Activated CD4-positive, alpha-beta T cell treated with anti-CD3 and anti-CD28 coated beads for 36 hours (primary cell): ENCODE measurements at regions of chr17 and their contacts with region 1.

Region 1: GRCh38 chr17:640436-640835 is 74.2 kb downstream of the VPS53 start:
- DNase-seq: no peak
- ATAC-seq: no peak
- H3K4me3 Mint-ChIP-seq: no peak overlapping the region
- H3K27ac Mint-ChIP-seq: no peak overlapping the region
- H3K4me1 Mint-ChIP-seq: peaks cover 13% of the 10 kb centered on the region
- H3K27me3 Mint-ChIP-seq: no peaks in the 10 kb centered on the region

Region 2: DNA sequence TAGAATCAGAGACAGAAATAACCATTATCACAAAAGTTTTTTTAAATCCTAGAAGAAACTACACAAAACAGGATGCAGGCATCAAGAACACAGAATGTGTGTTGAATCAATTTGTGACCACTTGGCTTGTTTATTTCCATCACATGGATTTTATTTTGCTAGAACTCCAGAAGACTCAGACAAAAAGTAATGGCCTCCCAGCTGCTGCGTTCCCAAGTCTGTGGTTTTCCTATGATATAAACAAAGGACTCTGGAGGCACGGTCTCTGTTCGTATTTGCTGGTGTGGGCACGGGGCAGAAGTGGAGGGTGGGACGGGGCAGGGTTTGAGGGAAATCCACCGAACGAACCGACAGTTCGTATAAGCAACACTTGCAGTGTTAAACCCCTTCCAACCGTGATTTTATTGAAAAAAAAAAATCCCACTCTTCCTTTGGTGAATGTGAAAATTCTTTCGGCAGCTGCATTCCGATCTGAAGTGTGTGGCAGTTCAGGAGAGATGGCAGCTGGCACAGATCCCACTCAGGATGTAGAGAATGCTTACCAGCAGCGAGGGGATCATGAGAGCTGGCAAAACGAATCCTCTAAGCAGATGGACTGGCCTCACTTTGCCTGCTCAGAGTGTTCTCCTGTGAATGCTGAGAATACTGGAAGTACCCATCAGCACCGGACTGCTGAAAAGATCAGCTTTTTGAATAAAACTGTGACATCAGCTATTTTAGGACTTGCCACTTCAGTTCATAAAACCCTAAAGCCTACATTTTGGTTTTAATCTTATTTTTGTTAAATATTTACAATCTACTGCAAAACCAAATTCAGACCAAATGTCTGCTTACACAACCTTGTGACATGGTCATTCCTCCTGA is 91.0 kb before region 1 on chr17:
- CTCF ChIA-PET with region 1: no interaction called
- POLR2A ChIA-PET with region 1: no interaction called
- intact Hi-C with region 1: loop called in 1 of 2 experiments (anchors 5 kb)
- DNase-seq: no peak
- ATAC-seq: no peak
- H3K4me3 Mint-ChIP-seq: no peak overlapping the region
- H3K27ac Mint-ChIP-seq: no peak overlapping the region
- H3K4me1 Mint-ChIP-seq: peaks cover 6% of the 10 kb centered on the region
- H3K27me3 Mint-ChIP-seq: no peaks in the 10 kb centered on the region

Region 3: GRCh38 chr17:740240-741017 is 100.0 kb after region 1 on chr17:
- CTCF ChIA-PET with region 1: no interaction called
- POLR2A ChIA-PET with region 1: no interaction called
- intact Hi-C with region 1: loop called in 1 of 2 experiments (anchors 1 kb)
- DNase-seq: peak; percentile 78
- ATAC-seq: peak; percentile 88
- H3K4me3 Mint-ChIP-seq: peak overlapping the region; percentile 38
- H3K27ac Mint-ChIP-seq: peak overlapping the region; percentile 86
- H3K4me1 Mint-ChIP-seq: peaks cover 23% of the 10 kb centered on the region
- H3K27me3 Mint-ChIP-seq: no peaks in the 10 kb centered on the region